ENCODE measurements at regions of chr12 and their contacts with region 1.

Region 1: GRCh38 chr12:70849265-70849960 is 71.1 kb downstream of the PTPRR start:
- DNase-seq: no peak

Region 2: GRCh38 chr12:69879041-69879960 is 970.1 kb before region 1 on chr12:
- intact Hi-C with region 1: loop called (anchors 10 kb)
- DNase-seq: peak; percentile 43 to 95 (median 80)

Region 3: DNA sequence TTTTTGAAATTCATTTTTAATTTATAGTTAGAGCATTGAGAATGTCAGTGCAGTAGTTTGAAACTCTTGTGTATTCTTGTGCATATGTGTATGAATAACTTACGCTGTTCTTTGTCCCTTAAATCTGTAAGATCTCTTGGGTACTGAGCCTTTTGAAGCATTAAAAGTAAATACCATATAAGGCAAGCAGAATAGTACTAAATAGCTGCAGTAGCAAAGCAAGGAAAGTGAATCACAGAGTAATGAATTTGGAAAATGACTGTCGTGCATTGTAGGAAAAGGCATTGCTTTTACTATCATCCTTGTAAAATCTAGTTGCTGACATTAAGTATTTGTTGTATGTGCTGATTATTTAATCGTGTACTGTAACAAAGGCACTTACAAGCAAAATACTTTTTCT is 594.1 kb before region 1 on chr12:
- intact Hi-C with region 1: no loop called
- DNase-seq: no peak

Region 4: DNA sequence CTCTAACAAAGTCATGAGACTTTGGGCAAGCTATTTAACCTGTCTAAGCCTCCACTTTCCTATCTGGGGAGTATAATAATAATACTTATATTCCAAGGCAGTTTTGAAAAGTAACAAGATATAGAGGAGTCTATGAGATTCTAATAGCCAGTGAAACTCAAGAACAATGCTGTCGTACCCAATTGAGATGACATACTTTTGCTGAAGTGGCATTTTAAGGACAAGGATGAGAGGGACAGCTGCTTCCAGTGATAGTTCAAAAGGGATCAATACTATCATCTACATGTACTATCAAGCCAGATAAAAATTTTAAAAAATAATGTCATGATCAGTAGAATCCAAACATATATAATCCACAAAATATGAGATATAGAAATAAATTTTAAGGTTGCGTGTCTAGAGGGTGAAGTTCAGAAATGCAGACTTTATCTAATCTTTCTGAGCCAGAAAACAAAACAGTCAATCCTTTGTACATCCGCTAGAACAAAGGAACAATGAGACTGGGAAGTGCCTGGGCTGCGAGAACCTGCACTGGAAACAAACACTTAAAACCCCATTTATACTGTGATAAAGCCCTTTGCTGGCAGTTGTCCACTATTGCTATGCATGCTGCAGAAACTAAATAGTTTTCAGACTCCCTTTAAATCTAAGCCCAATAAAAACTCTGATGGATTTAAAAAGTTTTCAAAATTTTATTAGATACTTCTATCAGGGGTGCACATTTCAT is 250.8 kb before region 1 on chr12:
- intact Hi-C with region 1: no loop called
- DNase-seq: peak in 1 of 10 donors; percentile 27

Region 5: DNA sequence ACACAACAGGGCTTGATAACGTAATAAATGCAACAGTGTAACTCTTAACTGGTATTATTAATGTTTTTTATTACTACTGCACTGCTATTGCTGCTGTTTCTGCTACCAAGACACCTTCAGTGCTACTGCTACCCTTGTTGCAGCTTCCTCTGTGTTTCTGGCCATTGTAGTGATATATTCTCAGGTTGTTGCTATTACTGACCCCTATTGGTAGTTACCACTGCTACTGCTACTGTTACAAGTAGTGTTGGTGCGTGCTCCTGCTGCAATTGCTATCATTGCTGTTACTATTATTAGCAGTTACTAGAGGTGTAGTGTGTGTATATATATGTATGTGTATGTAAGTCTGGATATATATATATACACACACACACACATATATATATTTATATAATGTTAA is 125.0 kb before region 1 on chr12:
- intact Hi-C with region 1: no loop called
- DNase-seq: no peak

Region 6: GRCh38 chr12:70747445-70748160 is 101.8 kb before region 1 on chr12:
- intact Hi-C with region 1: no loop called
- DNase-seq: no peak